CD8-positive, alpha-beta T cell (primary cell): ENCODE measurements at regions of chr19 and their contacts with region 1.

Region 1: DNA sequence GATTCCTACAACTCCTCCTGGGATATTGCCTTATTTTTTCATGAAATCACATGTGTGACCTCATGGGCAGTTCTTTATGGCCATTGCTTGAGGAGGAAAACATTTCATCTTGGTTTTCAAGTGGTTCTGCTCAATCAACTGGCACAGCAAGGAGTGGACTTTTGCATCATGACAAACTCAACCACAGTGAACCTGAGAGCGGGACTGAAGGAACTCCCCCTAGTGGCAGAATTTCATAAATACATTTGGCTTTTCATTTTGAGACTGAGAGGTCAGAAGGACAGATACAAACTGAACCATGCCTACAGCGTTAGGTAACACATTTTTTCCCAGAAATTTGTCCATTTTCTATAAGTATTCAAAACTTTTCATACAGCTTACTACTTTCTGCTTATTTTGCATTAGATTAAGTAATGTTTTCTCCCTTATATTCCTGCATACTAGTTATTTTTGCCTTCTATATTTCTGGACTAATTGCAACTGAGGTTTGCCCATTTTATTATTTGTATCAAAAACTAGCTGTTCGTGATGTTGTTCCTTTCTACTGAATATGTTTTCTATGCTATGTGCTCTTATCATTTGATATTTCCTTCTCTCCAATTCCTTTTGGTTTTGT is 13.4 kb upstream of the SIGLEC12 start:
- DNase-seq: peak in 5 of 9 experiments; percentile 4 to 68 (median 20)
- ATAC-seq: no peak
- H3K4me3 ChIP-seq: no peak overlapping the region
- H3K4me3 Mint-ChIP-seq: no peak overlapping the region
- H3K27ac ChIP-seq: no peak overlapping the region
- H3K27ac Mint-ChIP-seq: no peak overlapping the region
- H3K4me1 ChIP-seq: no peaks in the 10 kb centered on the region
- H3K4me1 Mint-ChIP-seq: no peaks in the 10 kb centered on the region
- H3K27me3 ChIP-seq: no peaks in the 10 kb centered on the region
- H3K27me3 Mint-ChIP-seq: peaks cover 28% of the 10 kb centered on the region
- CTCF ChIP-seq: peak; percentile 83

Region 2: GRCh38 chr19:51501594-51502263 is 13.2 kb before region 1 on chr19 and contains the start of gene SIGLEC12:
- CTCF ChIA-PET with region 1: interaction called, 14 read pairs
- POLR2A ChIA-PET with region 1: no interaction called
- intact Hi-C with region 1: no loop called
- DNase-seq: peak in 1 of 9 experiments; percentile 16
- ATAC-seq: no peak
- H3K4me3 ChIP-seq: no peak within 1 kb of the TSS
- H3K4me3 Mint-ChIP-seq: no peak within 1 kb of the TSS
- H3K27ac ChIP-seq: no peak within 1 kb of the TSS
- H3K27ac Mint-ChIP-seq: no peak within 1 kb of the TSS
- H3K4me1 ChIP-seq: no peaks in the 10 kb centered on the region
- H3K4me1 Mint-ChIP-seq: peaks cover 5% of the 10 kb centered on the region
- H3K27me3 ChIP-seq: no peaks in the 10 kb centered on the region
- H3K27me3 Mint-ChIP-seq: peaks cover 8% of the 10 kb centered on the region
- CTCF ChIP-seq: no peak
- total RNA-seq, gene SIGLEC12: not detected

Region 3: GRCh38 chr19:51525686-51526085 is 10.7 kb after region 1 on chr19:
- CTCF ChIA-PET with region 1: interaction called, 11 read pairs
- POLR2A ChIA-PET with region 1: no interaction called
- intact Hi-C with region 1: no loop called
- DNase-seq: no peak
- ATAC-seq: no peak
- H3K4me3 ChIP-seq: no peak overlapping the region
- H3K4me3 Mint-ChIP-seq: no peak overlapping the region
- H3K27ac ChIP-seq: no peak overlapping the region
- H3K27ac Mint-ChIP-seq: no peak overlapping the region
- H3K4me1 ChIP-seq: no peaks in the 10 kb centered on the region
- H3K4me1 Mint-ChIP-seq: no peaks in the 10 kb centered on the region
- H3K27me3 ChIP-seq: no peaks in the 10 kb centered on the region
- H3K27me3 Mint-ChIP-seq: peaks cover 31% of the 10 kb centered on the region
- CTCF ChIP-seq: no peak

Region 4: DNA sequence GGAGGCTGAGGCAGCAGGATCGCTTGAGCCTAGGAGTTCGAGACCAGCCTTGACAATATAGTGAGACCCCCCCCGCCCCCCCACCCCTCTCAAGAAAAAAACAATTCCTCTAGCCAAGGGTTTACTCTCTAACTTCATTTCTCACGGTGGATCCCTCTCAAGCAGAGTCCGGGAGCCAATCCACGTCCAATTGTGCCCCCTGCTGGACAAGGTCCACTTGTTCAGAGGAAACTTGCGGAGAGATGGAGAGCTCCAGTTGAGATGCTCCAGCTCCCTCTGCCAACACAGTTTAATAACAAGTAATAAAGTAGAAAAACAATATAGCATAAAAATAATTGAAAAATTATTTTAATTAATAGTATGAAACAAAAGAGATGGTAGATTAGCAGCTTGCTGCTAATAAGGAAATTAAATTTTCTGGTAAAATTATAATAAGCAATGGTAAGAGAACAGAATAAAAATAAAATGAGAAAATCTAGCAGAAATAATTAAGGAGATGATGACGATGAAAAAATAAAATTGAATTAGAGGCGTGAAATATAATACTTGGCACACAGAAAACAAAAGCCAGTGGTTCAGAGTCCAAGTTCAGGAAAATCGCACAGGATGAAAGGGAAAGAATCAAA is 146.1 kb after region 1 on chr19:
- CTCF ChIA-PET with region 1: interaction called, 3 read pairs
- POLR2A ChIA-PET with region 1: no interaction called
- intact Hi-C with region 1: loop called in 1 of 2 experiments (anchors 1 kb)
- DNase-seq: peak in 5 of 9 experiments; percentile 41 to 54 (median 53)
- ATAC-seq: no peak
- H3K4me3 ChIP-seq: no peak overlapping the region
- H3K4me3 Mint-ChIP-seq: no peak overlapping the region
- H3K27ac ChIP-seq: no peak overlapping the region
- H3K27ac Mint-ChIP-seq: no peak overlapping the region
- H3K4me1 ChIP-seq: peaks cover 3% of the 10 kb centered on the region
- H3K4me1 Mint-ChIP-seq: peaks cover 5% of the 10 kb centered on the region
- H3K27me3 ChIP-seq: peaks cover 0 to 6% of the 10 kb centered on the region in 2 experiments
- H3K27me3 Mint-ChIP-seq: peaks cover 35% of the 10 kb centered on the region
- CTCF ChIP-seq: peak; percentile 17